Mammary epithelial cell (primary cell): ENCODE measurements at regions of chr9 and their contacts with region 1.

Region 1: DNA sequence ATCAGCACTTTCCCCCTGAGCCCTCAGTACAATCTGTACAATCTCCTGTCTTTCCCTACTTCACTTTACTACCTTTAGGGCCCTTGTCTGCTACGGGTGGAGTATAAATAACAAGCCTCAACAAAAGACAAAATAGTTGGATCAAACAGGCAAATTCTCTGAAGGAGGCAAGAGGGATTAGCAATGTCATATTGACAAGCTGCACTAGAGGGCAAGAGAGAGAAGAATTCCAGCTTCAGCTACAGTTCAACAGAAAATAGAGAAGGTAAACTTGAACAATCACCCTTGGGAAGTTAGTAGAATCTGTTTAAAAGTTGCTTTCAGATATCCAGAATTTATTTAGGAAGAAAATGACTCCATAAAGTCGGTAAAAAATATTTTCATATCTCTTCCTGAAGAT is 68.4 kb upstream of the IZUMO3 start:
- DNase-seq: peak; percentile 21
- H3K4me3 ChIP-seq: no peak overlapping the region
- H3K27ac ChIP-seq: no peak overlapping the region
- H3K4me1 ChIP-seq: no peaks in the 10 kb centered on the region
- H3K27me3 ChIP-seq: peaks cover 2% of the 10 kb centered on the region
- CTCF ChIP-seq: peak; percentile 29 to 55

Region 2: GRCh38 chr9:24245988-24246387 is 368.1 kb before region 1 on chr9:
- CTCF ChIA-PET with region 1: no interaction called
- dilution Hi-C with region 1: no loop called
- in situ Hi-C with region 1: no loop called
- intact Hi-C with region 1: loop called (anchors 5 kb)
- DNase-seq: peak; percentile 17
- H3K4me3 ChIP-seq: no peak overlapping the region
- H3K27ac ChIP-seq: no peak overlapping the region
- H3K4me1 ChIP-seq: no peaks in the 10 kb centered on the region
- H3K27me3 ChIP-seq: no peaks in the 10 kb centered on the region
- CTCF ChIP-seq: peak; percentile 49 to 61

Region 3: DNA sequence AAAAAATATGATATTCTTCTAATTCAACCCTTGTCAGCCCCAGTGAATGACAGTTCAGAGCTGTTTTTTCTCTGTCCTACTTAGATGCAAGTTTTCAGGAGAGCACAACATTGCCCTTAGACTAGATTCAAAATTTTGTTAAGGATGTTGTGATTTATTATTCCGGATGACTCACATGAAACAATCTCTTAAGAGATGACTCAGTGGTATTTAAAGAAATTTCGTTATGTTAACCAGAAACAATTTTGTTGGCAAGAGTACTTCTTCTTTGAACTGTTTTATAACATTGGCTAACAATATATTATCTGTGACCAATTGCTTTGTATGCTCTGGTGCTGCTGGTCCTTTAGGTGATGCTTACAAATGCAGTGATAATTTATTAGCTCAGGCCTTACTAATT is 200.4 kb before region 1 on chr9:
- CTCF ChIA-PET with region 1: interaction called, 16 read pairs
- dilution Hi-C with region 1: no loop called
- in situ Hi-C with region 1: no loop called
- intact Hi-C with region 1: no loop called
- DNase-seq: peak; percentile 41
- H3K4me3 ChIP-seq: no peak overlapping the region
- H3K27ac ChIP-seq: no peak overlapping the region
- H3K4me1 ChIP-seq: no peaks in the 10 kb centered on the region
- H3K27me3 ChIP-seq: no peaks in the 10 kb centered on the region
- CTCF ChIP-seq: no peak

Region 4: DNA sequence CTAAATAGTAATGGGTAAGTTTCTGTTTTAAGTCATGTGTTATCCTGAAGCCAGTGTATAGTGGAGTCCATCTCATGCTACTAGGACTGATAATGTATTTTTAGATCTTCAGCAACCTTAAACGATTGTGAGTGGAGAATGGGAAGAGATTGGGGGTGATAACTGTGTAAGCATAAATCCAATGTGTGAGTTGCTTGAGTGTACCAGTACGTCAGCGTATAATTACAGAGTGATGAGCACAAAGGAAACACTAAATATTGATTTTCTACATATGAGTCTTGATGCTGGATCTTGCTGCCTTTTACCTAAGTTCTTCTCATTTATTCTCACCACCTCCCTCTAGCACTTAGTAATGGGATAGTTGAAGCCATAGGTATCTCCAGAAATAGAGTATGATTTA is 52.1 kb before region 1 on chr9:
- CTCF ChIA-PET with region 1: no interaction called
- dilution Hi-C with region 1: no loop called
- in situ Hi-C with region 1: no loop called
- intact Hi-C with region 1: loop called (anchors 10 kb)
- DNase-seq: no peak
- H3K4me3 ChIP-seq: no peak overlapping the region
- H3K27ac ChIP-seq: no peak overlapping the region
- H3K4me1 ChIP-seq: no peaks in the 10 kb centered on the region
- H3K27me3 ChIP-seq: no peaks in the 10 kb centered on the region
- CTCF ChIP-seq: no peak

Region 5: GRCh38 chr9:24657387-24657786 is 43.3 kb after region 1 on chr9:
- CTCF ChIA-PET with region 1: no interaction called
- dilution Hi-C with region 1: no loop called
- in situ Hi-C with region 1: no loop called
- intact Hi-C with region 1: no loop called
- DNase-seq: no peak
- H3K4me3 ChIP-seq: no peak overlapping the region
- H3K27ac ChIP-seq: no peak overlapping the region
- H3K4me1 ChIP-seq: no peaks in the 10 kb centered on the region
- H3K27me3 ChIP-seq: no peaks in the 10 kb centered on the region
- CTCF ChIP-seq: no peak